T-cell (primary cell): ENCODE measurements at regions of chr13 and their contacts with region 1.

Region 1: DNA sequence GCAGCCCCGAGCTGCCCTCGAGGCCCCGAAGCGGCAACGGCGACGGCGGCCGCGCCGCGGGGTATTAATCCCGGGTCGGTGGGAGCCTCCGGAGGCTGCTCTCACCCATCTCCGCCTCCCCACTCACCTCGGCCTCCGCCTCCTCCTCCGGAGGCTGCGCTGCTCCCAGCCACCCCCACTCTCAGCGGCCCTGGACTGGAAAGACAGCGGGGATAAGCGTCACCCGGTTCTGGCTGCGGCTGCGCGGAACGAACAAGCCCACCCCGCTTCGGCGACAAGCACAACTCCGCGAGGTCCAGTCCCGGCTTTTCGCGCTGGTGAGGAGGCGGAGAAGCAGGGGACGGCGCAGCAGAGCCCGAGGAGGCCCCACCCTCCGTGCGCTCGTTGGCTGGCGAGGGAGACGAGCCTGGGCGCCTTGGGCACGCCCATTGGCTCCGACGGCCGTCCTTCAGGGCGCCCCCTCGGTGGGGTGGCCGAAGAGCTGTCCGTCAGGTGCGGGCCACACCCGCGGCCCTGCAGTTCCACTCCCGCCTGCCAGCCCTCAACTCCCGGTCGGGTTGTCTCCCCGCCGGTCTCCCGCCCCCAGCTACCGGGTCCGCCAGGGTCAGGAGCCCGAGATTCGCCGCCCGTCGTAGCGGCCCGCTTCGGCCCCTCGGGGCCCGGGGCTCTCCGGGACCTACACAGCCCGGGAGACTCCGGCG is at the start of gene ZMYM5:
- DNase-seq: peak; percentile 85 to 97 (median 91)
- ATAC-seq: peak; percentile 84 to 88 (median 86)
- H3K4me3 ChIP-seq: peak within 1 kb of the TSS; percentile 81 to 94
- H3K4me3 Mint-ChIP-seq: peak within 1 kb of the TSS; percentile 95 to 98 (median 98)
- H3K27ac ChIP-seq: peak within 1 kb of the TSS; percentile 97
- H3K27ac Mint-ChIP-seq: peak within 1 kb of the TSS; percentile 95 to 98
- H3K4me1 ChIP-seq: peaks cover 17 to 36% of the 10 kb centered on the region in 2 experiments
- H3K4me1 Mint-ChIP-seq: peaks cover 30 to 42% (median 39%) of the 10 kb centered on the region in 3 donors
- H3K27me3 ChIP-seq: no peaks in the 10 kb centered on the region
- H3K27me3 Mint-ChIP-seq: no peaks in the 10 kb centered on the region
- total RNA-seq, gene ZMYM5: 19.2 to 30.9 (median 23.0) TPM

Region 2: DNA sequence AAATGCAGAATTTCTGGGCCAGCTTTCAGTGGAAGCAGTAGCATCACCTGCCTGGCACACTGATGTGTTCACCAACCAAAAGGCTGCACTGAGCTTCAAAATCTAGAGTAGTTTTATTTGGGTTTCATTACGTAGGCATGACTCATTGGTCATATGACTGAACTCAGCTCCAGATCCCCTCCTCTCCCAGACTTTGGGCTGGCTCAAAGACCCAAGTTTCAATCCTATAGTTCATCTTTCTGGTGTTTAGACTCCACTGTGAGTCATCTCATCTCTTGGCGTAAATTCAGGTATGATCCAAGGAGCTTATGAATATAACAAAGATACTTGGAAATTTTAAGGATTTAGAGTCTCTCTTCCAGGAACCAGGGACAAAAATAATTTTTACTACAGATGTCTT is 17.7 kb before region 1 on chr13:
- CTCF ChIA-PET with region 1: interaction called, 3 to 5 read pairs
- POLR2A ChIA-PET with region 1: interaction called, 6 to 19 read pairs
- DNase-seq: peak in 1 of 35 experiments; percentile 9
- ATAC-seq: no peak
- H3K4me3 ChIP-seq: no peak overlapping the region
- H3K4me3 Mint-ChIP-seq: no peak overlapping the region
- H3K27ac ChIP-seq: no peak overlapping the region
- H3K27ac Mint-ChIP-seq: peak overlapping the region in 1 of 2 donors; percentile 71
- H3K4me1 ChIP-seq: no peaks in the 10 kb centered on the region
- H3K4me1 Mint-ChIP-seq: peaks cover 15 to 38% (median 22%) of the 10 kb centered on the region in 3 donors
- H3K27me3 ChIP-seq: no peaks in the 10 kb centered on the region
- H3K27me3 Mint-ChIP-seq: no peaks in the 10 kb centered on the region

Region 3: GRCh38 chr13:19852766-19853165 is 10.7 kb before region 1 on chr13:
- CTCF ChIA-PET with region 1: interaction called, 3 read pairs
- POLR2A ChIA-PET with region 1: interaction called in 1 of 2 experiments, 19 read pairs
- DNase-seq: no peak
- ATAC-seq: no peak
- H3K4me3 ChIP-seq: no peak overlapping the region
- H3K4me3 Mint-ChIP-seq: no peak overlapping the region
- H3K27ac ChIP-seq: no peak overlapping the region
- H3K27ac Mint-ChIP-seq: no peak overlapping the region
- H3K4me1 ChIP-seq: peaks cover 5 to 14% of the 10 kb centered on the region in 2 experiments
- H3K4me1 Mint-ChIP-seq: peaks cover 29 to 35% (median 34%) of the 10 kb centered on the region in 3 donors
- H3K27me3 ChIP-seq: no peaks in the 10 kb centered on the region
- H3K27me3 Mint-ChIP-seq: no peaks in the 10 kb centered on the region

Region 4: DNA sequence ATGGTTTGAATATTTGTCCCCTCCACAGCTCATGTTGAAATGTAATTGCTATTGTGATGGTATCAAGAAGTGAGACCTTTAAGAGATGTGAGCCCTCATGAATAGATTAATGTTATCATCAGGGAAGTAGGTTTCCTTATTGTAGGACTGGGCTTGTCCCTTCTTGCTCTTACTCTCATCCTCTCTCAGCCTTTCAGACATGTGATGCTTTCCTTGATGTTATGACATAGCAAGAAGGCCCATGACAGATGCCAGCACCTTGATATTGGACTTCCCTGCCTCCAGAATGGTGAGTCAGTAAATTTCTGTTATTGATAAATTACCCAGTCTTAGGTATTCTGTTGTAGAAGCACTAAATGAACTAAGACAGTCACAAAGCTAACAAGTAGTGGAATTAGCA is 89.4 kb after region 1 on chr13:
- CTCF ChIA-PET with region 1: no interaction called
- POLR2A ChIA-PET with region 1: interaction called in 1 of 2 experiments, 10 read pairs
- DNase-seq: no peak
- ATAC-seq: no peak
- H3K4me3 ChIP-seq: no peak overlapping the region
- H3K4me3 Mint-ChIP-seq: no peak overlapping the region
- H3K27ac ChIP-seq: no peak overlapping the region
- H3K27ac Mint-ChIP-seq: no peak overlapping the region
- H3K4me1 ChIP-seq: peaks cover 0 to 6% of the 10 kb centered on the region in 2 experiments
- H3K4me1 Mint-ChIP-seq: peaks cover 0 to 3% (median 0%) of the 10 kb centered on the region in 3 donors
- H3K27me3 ChIP-seq: no peaks in the 10 kb centered on the region
- H3K27me3 Mint-ChIP-seq: no peaks in the 10 kb centered on the region